Calu3 (cell line): ENCODE measurements at regions of chr15 and their contacts with region 1.

Region 1: GRCh38 chr15:64067564-64068030 is 21.3 kb upstream of the DAPK2 start:
- DNase-seq: peak; percentile 80
- H3K4me3 Mint-ChIP-seq: no peak overlapping the region
- H3K27ac Mint-ChIP-seq: no peak overlapping the region
- H3K4me1 Mint-ChIP-seq: no peaks in the 10 kb centered on the region
- H3K27me3 Mint-ChIP-seq: no peaks in the 10 kb centered on the region
- CTCF ChIP-seq: peak; percentile 96

Region 2: DNA sequence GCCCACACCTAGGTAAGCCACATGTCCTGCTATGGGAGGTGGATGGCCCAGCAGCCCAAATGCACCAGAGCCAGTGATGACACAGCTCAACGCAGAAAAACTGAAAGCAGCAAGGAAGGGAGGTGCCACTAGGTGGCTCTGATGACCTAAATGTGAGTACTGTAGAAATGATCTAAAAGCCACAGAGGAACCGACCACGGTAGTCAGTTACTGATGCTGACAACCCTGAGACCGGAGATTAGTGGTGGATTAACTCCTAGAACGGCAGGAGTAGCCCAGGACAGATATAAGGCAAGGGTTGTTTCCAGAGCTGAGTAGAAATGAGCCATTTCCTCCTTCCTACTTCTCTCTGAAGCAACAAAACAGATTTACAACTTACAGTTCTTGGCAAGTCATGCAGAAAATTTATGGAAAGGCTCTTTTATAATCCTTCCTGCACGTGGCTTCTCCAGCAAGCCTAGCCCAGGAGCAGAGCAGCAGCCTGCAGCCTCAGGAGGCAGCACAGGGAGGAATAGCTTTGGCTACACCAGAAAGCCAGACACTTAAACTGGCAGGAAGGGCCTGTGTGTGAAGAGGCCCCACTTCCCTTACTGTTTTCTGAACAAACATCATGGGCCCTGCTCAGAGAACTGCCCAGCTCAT is 457.3 kb before region 1 on chr15:
- CTCF ChIA-PET with region 1: interaction called, 6 read pairs
- intact Hi-C with region 1: loop called (anchors 1 kb)
- DNase-seq: peak; percentile 77
- H3K4me3 Mint-ChIP-seq: no peak overlapping the region
- H3K27ac Mint-ChIP-seq: no peak overlapping the region
- H3K4me1 Mint-ChIP-seq: peaks cover 24% of the 10 kb centered on the region
- H3K27me3 Mint-ChIP-seq: no peaks in the 10 kb centered on the region
- CTCF ChIP-seq: peak; percentile 69

Region 3: GRCh38 chr15:63752075-63752684 is 315.4 kb before region 1 on chr15:
- CTCF ChIA-PET with region 1: interaction called, 50 read pairs
- intact Hi-C with region 1: loop called (anchors 1 kb)
- DNase-seq: peak; percentile 61
- H3K4me3 Mint-ChIP-seq: no peak overlapping the region
- H3K27ac Mint-ChIP-seq: no peak overlapping the region
- H3K4me1 Mint-ChIP-seq: no peaks in the 10 kb centered on the region
- H3K27me3 Mint-ChIP-seq: no peaks in the 10 kb centered on the region
- CTCF ChIP-seq: peak; percentile 68

Region 4: GRCh38 chr15:63826528-63826927 is 241.1 kb before region 1 on chr15:
- CTCF ChIA-PET with region 1: interaction called, 10 read pairs
- intact Hi-C with region 1: loop called (anchors 2 kb)
- DNase-seq: peak; percentile 16
- H3K4me3 Mint-ChIP-seq: no peak overlapping the region
- H3K27ac Mint-ChIP-seq: no peak overlapping the region
- H3K4me1 Mint-ChIP-seq: no peaks in the 10 kb centered on the region
- H3K27me3 Mint-ChIP-seq: no peaks in the 10 kb centered on the region
- CTCF ChIP-seq: no peak

Region 5: DNA sequence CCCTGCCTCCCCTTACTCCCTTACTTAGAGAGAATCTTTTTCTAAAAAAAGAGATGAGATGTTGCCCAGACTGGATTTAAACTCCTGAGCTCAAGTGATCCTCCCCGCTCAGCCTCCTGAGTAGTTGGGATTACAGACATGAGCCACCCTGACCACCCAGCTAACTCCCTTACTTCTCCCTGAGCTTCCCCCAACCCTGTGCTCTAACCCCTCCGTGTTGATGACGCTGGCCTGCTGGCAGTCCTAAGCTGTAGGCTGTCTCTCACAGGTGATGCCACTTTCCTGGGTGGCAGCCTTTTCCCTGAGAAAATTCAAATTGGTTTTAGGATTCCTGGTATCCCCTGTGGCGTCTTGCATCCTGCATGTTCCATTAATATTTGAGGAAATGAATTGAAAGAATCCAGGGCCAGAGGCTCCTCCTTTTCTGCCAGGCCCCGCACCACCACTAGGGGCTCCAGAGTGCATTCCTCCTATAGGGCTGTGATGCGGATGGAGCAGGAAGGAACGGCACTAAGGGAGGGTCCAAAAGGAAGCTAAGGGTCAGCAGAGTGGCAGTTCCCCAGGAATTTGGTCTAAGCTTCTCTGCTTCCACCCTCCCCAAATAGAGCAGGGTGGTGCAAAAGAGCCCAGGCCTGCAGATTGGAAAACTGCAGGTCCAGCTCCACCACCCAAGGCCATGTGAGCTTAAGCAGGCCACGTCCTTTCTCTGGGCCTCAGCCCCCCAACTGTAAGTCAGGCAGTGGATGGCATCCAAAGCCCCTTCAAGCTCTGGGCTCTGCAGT is 122.4 kb before region 1 on chr15:
- CTCF ChIA-PET with region 1: interaction called, 13 read pairs
- intact Hi-C with region 1: loop called (anchors 2 kb)
- DNase-seq: peak; percentile 86
- H3K4me3 Mint-ChIP-seq: no peak overlapping the region
- H3K27ac Mint-ChIP-seq: peak overlapping the region; percentile 53
- H3K4me1 Mint-ChIP-seq: peaks cover 16% of the 10 kb centered on the region
- H3K27me3 Mint-ChIP-seq: peaks cover 12% of the 10 kb centered on the region
- CTCF ChIP-seq: peak; percentile 94

Region 6: DNA sequence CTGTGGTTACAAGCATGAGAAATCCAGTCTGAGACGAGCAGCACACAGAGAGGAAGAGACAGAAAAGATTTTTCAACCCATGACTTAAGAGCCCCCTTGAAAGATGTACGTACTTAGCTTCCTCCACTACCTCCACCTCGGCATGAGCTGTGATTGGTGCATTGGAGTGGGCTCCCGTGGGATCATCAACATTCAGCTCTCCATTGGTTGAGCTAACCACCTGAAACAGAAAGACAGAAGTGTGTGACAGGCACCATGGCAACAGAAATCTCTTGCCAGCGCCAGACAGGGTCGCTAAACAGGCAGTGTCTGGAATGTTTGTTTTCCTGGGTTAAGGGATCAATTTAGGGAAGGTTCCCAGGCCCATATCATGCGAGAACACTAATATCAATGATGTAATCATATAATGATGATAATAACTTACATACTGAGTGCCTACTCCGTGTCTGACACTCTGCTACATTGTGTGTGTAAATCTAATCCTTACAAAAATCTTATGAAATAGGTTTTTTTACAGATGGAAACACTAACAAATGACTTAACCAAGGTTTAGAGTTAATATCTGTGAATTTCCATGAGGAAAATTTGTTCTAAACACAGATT is 112.7 kb after region 1 on chr15:
- CTCF ChIA-PET with region 1: no interaction called
- intact Hi-C with region 1: no loop called
- DNase-seq: no peak
- H3K4me3 Mint-ChIP-seq: no peak overlapping the region
- H3K27ac Mint-ChIP-seq: no peak overlapping the region
- H3K4me1 Mint-ChIP-seq: no peaks in the 10 kb centered on the region
- H3K27me3 Mint-ChIP-seq: no peaks in the 10 kb centered on the region
- CTCF ChIP-seq: no peak